ENCODE measurements at regions of chr1 and their contacts with region 1.

Region 1: GRCh38 chr1:6889875-6890480 is 104.7 kb downstream of the CAMTA1 start:
- DNase-seq: peak; percentile 72
- H3K4me3 ChIP-seq: no peak overlapping the region
- H3K27ac ChIP-seq: no peak overlapping the region
- H3K4me1 ChIP-seq: peaks cover 0 to 7% (median 2%) of the 10 kb centered on the region in 4 donors
- H3K27me3 ChIP-seq: no peaks in the 10 kb centered on the region
- CTCF ChIP-seq: peak; percentile 69 to 86 (median 76)
- EP300 ChIP-seq: no peak
- POLR2A ChIP-seq: no peak

Region 2: DNA sequence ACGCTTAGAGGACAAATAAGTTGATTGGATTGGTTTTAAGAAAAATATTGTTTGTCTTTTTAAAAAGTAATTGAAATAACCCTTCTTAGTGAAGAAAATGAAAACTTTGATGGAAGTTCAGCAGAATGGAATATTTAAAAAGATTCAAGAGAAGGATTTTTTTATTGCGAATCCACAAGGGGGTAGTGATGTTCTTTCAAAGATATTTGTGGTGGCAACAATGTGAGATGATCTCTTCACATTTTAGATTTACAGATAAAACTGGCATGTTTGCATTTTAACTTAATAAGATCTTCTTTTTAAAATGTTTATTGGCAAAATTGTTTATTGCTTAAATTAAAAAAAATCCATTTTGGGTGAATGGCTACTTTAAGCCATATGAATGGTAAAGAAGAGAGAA is 95.8 kb before region 1 on chr1:
- in situ Hi-C with region 1: loop called in 1 of 4 experiments (anchors 10 kb)
- intact Hi-C with region 1: no loop called
- DNase-seq: no peak
- H3K4me3 ChIP-seq: no peak overlapping the region
- H3K27ac ChIP-seq: no peak overlapping the region
- H3K4me1 ChIP-seq: peaks cover 0 to 30% (median 2%) of the 10 kb centered on the region in 4 donors
- H3K27me3 ChIP-seq: no peaks in the 10 kb centered on the region
- CTCF ChIP-seq: peak; percentile 35 to 52 (median 42)
- EP300 ChIP-seq: no peak
- POLR2A ChIP-seq: no peak

Region 3: DNA sequence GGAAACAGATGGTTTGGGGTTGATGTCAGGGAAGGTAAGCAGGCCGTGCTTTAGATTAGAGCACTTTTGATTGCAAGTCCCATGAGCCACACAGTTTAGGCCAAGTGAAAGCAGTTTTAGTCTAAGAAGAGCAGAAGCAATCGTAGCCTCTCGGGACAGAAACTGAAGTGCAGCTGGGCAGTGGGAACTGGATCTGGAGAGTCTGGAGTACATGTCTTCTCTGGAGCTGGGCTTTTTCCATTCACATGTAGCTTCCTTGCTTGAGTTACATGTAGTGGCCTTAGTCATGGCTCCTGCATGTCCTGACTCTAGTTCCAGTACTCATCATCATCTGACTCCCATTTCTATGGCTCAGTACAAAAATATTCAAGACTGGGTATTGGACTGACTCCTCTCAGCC is 88.0 kb before region 1 on chr1:
- in situ Hi-C with region 1: loop called in 2 of 4 experiments (anchors 10 kb)
- intact Hi-C with region 1: no loop called
- DNase-seq: no peak
- H3K4me3 ChIP-seq: no peak overlapping the region
- H3K27ac ChIP-seq: peak overlapping the region in 3 of 4 donors; percentile 0 to 51 (median 12)
- H3K4me1 ChIP-seq: peaks cover 9 to 70% (median 45%) of the 10 kb centered on the region in 4 donors
- H3K27me3 ChIP-seq: no peaks in the 10 kb centered on the region
- CTCF ChIP-seq: no peak
- EP300 ChIP-seq: no peak
- POLR2A ChIP-seq: no peak

Region 4: GRCh38 chr1:7646981-7647901 is 757.3 kb after region 1 on chr1:
- in situ Hi-C with region 1: no loop called
- intact Hi-C with region 1: no loop called
- DNase-seq: peak; percentile 74
- H3K4me3 ChIP-seq: no peak overlapping the region
- H3K27ac ChIP-seq: no peak overlapping the region
- H3K4me1 ChIP-seq: peaks cover 0 to 3% (median 0%) of the 10 kb centered on the region in 4 donors
- H3K27me3 ChIP-seq: no peaks in the 10 kb centered on the region
- CTCF ChIP-seq: peak; percentile 91 to 97 (median 94)
- EP300 ChIP-seq: no peak
- POLR2A ChIP-seq: no peak